ENCODE measurements at regions of chr12 and their contacts with region 1.

Region 1: GRCh38 chr12:124567661-124568373 is 405 bp upstream of the NCOR2 start:
- H3K4me3 Mint-ChIP-seq: peak overlapping the region; percentile 74
- H3K27ac Mint-ChIP-seq: peak overlapping the region; percentile 95
- H3K4me1 Mint-ChIP-seq: peaks cover 66% of the 10 kb centered on the region
- H3K27me3 Mint-ChIP-seq: peaks cover 1% of the 10 kb centered on the region

Region 2: DNA sequence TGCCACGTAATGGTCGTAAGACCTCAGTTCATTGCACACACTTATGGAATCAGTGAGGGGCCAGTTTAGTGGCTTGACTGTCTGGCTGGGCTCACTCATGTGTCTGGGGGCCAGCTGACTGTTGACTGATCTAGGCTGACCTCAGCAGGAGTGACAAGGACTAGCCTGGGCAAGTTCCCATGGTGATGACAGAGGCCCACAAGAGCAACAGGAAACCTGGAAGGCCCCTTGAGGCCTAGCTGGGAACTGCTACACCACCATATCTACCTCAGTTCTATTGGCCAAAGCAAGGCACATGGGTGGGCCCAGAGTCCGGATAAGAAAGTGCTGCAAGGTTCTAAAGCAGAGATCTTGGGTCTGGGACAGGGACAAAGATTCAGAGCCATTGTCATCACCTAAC is 294.2 kb before region 1 on chr12:
- intact Hi-C with region 1: no loop called
- H3K4me3 Mint-ChIP-seq: no peak overlapping the region
- H3K27ac Mint-ChIP-seq: no peak overlapping the region
- H3K4me1 Mint-ChIP-seq: peaks cover 16% of the 10 kb centered on the region
- H3K27me3 Mint-ChIP-seq: peaks cover 41% of the 10 kb centered on the region

Region 3: GRCh38 chr12:124453419-124454351 is 114.1 kb before region 1 on chr12:
- intact Hi-C with region 1: loop called (anchors 5 kb)
- H3K4me3 Mint-ChIP-seq: peak overlapping the region; percentile 39
- H3K27ac Mint-ChIP-seq: peak overlapping the region; percentile 75
- H3K4me1 Mint-ChIP-seq: peaks cover 69% of the 10 kb centered on the region
- H3K27me3 Mint-ChIP-seq: no peaks in the 10 kb centered on the region

Region 4: DNA sequence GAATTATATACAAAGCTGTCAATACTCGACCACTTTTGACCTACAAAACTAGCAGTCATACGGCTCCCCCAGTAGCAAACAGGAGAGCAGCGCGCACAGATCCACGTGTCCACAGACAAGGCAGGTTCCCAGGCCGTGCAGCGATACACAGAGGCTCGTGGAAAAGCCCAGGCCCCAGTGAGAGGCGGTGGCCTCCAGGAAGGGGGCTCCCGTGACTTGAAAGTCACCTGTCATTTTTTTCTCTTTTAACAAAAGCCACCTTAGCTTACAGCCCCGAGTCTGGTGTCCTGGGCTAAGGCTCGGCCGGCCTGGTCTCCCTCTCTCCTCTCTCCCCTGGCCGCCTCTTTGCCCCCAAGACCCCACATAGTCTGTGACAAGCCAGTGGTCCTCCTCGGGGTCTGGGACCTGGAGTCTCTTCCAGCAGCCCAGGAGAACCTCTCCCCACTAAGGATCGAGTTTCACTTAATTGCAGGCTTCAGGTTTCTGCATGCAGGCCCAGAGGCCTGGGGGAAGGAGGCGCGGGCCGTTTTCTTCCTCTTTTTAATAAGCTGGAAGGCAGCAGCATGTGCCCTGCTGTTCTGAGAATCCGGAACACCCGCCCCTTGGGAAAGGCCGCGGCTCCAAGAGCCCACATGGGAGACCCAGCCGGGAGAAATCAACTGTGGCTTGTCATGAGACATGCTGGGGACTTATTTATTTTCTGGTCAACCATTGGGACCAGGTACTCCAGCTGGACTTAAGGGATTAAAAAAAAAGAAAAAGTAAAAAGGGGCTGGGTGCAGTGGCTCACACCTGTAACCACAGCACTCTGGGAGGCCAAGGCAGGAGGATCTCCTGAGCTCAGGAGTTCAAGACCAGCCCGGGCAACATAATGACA is 16.3 kb before region 1 on chr12:
- intact Hi-C with region 1: loop called (anchors 1 kb)
- H3K4me3 Mint-ChIP-seq: peak overlapping the region; percentile 78
- H3K27ac Mint-ChIP-seq: peak overlapping the region; percentile 98
- H3K4me1 Mint-ChIP-seq: peaks cover 100% of the 10 kb centered on the region
- H3K27me3 Mint-ChIP-seq: no peaks in the 10 kb centered on the region

Region 5: GRCh38 chr12:124680863-124681778 is 113.3 kb after region 1 on chr12:
- intact Hi-C with region 1: loop called (anchors 1 kb)
- H3K4me3 Mint-ChIP-seq: peak overlapping the region; percentile 20
- H3K27ac Mint-ChIP-seq: peak overlapping the region; percentile 82
- H3K4me1 Mint-ChIP-seq: peaks cover 81% of the 10 kb centered on the region
- H3K27me3 Mint-ChIP-seq: peaks cover 10% of the 10 kb centered on the region

Region 6: GRCh38 chr12:124713436-124714082 is 145.7 kb after region 1 on chr12:
- intact Hi-C with region 1: loop called (anchors 1 kb)
- H3K4me3 Mint-ChIP-seq: peak overlapping the region; percentile 57
- H3K27ac Mint-ChIP-seq: peak overlapping the region; percentile 96
- H3K4me1 Mint-ChIP-seq: peaks cover 50% of the 10 kb centered on the region
- H3K27me3 Mint-ChIP-seq: peaks cover 25% of the 10 kb centered on the region

Region 7: GRCh38 chr12:124767066-124767821 is 199.4 kb after region 1 on chr12:
- intact Hi-C with region 1: loop called (anchors 1 kb)
- H3K4me3 Mint-ChIP-seq: no peak overlapping the region
- H3K27ac Mint-ChIP-seq: peak overlapping the region; percentile 64
- H3K4me1 Mint-ChIP-seq: peaks cover 59% of the 10 kb centered on the region
- H3K27me3 Mint-ChIP-seq: peaks cover 10% of the 10 kb centered on the region